CD4-positive, alpha-beta memory T cell (primary cell): ENCODE measurements at regions of chr6 and their contacts with region 1.

Region 1: DNA sequence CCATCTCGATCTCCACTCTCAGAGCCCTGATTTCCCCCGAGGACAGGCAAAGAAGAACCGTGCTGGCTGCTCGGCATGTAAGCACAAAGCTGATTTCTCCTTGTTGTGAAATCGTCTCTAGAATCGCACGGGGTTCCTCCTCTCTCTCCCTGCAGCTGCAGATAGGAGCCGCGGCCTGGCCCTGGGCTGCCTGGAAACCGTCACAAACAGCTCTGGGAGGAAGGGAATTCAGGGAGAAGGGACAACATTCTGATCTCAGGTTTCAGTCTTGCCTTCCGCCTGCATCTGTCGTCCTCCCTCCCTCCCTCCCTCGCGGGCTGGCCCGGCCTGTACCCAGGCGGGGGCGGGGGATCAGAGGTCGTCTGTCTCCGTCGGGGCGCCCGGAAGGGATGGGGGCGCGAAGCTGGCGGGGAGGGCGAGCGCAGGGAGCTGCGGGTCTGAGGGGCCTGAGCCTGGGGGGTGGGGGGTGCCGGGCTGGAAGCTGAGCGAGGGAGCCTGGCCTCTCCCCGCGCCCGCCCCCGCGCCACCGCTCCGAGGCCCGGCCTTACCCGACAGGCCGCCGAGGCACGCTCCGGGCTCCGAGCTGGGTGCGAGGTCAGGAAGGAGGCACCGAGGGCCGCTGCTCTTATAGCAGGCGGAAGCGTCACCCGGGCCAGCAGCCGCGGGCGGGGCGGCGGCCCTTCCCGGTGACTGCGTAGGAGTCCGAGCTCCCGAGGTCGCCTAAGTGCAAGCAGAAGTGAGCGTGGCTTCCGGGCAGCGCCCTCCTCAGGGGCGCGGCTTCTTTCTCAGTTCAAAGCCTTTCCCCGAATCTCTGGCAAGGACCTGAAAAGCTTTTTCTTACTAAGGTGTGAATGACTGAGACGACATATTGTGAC is at the start of gene SERPINB1:
- DNase-seq: peak; percentile 64 to 73 (median 68)
- H3K4me3 ChIP-seq: peak within 1 kb of the TSS; percentile 49 to 58
- H3K4me3 Mint-ChIP-seq: peak within 1 kb of the TSS; percentile 89 to 96 (median 93)
- H3K27ac ChIP-seq: peak within 1 kb of the TSS; percentile 73
- H3K27ac Mint-ChIP-seq: peak within 1 kb of the TSS; percentile 93 to 98 (median 95)
- H3K4me1 ChIP-seq: peaks cover 46% of the 10 kb centered on the region
- H3K4me1 Mint-ChIP-seq: peaks cover 39 to 63% (median 51%) of the 10 kb centered on the region in 4 donors
- H3K27me3 ChIP-seq: no peaks in the 10 kb centered on the region
- H3K27me3 Mint-ChIP-seq: no peaks in the 10 kb centered on the region
- total RNA-seq, gene SERPINB1: 56.7 to 58.0 TPM

Region 2: GRCh38 chr6:2765166-2765895 is 76.2 kb before region 1 on chr6 and contains the start of gene WRNIP1:
- CTCF ChIA-PET with region 1: interaction called, 8 read pairs
- POLR2A ChIA-PET with region 1: interaction called, 75 read pairs
- intact Hi-C with region 1: loop called (anchors 1 kb)
- DNase-seq: peak; percentile 95 to 98 (median 98)
- H3K4me3 ChIP-seq: peak within 1 kb of the TSS; percentile 63 to 79
- H3K4me3 Mint-ChIP-seq: peak within 1 kb of the TSS; percentile 93 to 97 (median 95)
- H3K27ac ChIP-seq: peak within 1 kb of the TSS; percentile 90
- H3K27ac Mint-ChIP-seq: peak within 1 kb of the TSS; percentile 98 to 100 (median 99)
- H3K4me1 ChIP-seq: peaks cover 45% of the 10 kb centered on the region
- H3K4me1 Mint-ChIP-seq: peaks cover 33 to 63% (median 43%) of the 10 kb centered on the region in 4 donors
- H3K27me3 ChIP-seq: no peaks in the 10 kb centered on the region
- H3K27me3 Mint-ChIP-seq: peaks cover 0 to 1% of the 10 kb centered on the region in 2 donors
- total RNA-seq, gene WRNIP1: 41.1 to 42.7 TPM

Region 3: DNA sequence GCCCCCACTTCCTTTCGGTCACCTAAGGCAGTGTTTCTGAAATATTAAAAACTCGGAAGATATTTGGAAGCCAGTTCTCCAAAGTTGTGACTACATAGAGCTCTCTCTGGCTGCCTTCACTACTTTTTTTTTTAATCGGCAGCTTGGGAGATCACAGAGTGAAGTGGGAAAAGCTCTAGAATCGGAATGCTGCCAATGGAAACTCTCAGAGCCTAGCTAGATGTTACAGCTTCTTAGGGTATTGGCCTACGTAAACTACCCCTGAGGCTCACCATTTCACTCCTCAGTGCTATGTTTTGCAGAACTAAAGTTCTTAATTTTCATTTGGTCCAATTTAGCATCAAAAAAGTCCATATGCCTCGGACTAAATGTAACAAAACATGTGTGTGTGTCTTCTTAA is 14.4 kb before region 1 on chr6:
- CTCF ChIA-PET with region 1: interaction called, 8 read pairs
- POLR2A ChIA-PET with region 1: interaction called, 12 read pairs
- intact Hi-C with region 1: no loop called
- DNase-seq: no peak
- H3K4me3 ChIP-seq: no peak overlapping the region
- H3K4me3 Mint-ChIP-seq: no peak overlapping the region
- H3K27ac ChIP-seq: no peak overlapping the region
- H3K27ac Mint-ChIP-seq: no peak overlapping the region
- H3K4me1 ChIP-seq: no peaks in the 10 kb centered on the region
- H3K4me1 Mint-ChIP-seq: peaks cover 0 to 4% (median under 1%) of the 10 kb centered on the region in 4 donors
- H3K27me3 ChIP-seq: no peaks in the 10 kb centered on the region
- H3K27me3 Mint-ChIP-seq: no peaks in the 10 kb centered on the region

Region 4: DNA sequence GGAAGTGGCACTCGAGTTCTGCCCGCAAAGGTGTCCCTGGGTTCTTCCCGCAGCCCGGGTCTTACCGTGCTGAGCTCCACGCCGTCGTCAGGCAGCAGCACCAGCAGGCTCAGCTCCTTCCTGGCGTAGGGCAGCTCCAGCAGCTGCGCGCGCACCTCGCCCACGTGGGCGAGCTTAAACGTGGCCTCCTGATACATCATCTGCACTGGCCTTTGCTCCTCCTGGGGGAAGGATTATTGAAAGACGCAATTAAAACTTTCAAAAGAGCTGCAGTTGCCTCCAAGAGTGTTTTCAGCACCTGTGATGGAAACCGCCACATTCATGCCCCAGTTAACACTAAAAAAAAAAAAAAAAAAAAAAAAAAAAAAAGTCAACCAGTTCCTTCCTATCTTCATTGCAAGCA is 50.3 kb after region 1 on chr6:
- CTCF ChIA-PET with region 1: interaction called, 135 read pairs
- POLR2A ChIA-PET with region 1: interaction called, 33 read pairs
- intact Hi-C with region 1: loop called (anchors 1 kb)
- DNase-seq: peak; percentile 79 to 94 (median 85)
- H3K4me3 ChIP-seq: no peak overlapping the region
- H3K4me3 Mint-ChIP-seq: peak overlapping the region; percentile 77 to 88 (median 81)
- H3K27ac ChIP-seq: peak overlapping the region; percentile 49
- H3K27ac Mint-ChIP-seq: peak overlapping the region; percentile 91 to 96 (median 95)
- H3K4me1 ChIP-seq: peaks cover 55% of the 10 kb centered on the region
- H3K4me1 Mint-ChIP-seq: peaks cover 40 to 75% (median 60%) of the 10 kb centered on the region in 4 donors
- H3K27me3 ChIP-seq: no peaks in the 10 kb centered on the region
- H3K27me3 Mint-ChIP-seq: no peaks in the 10 kb centered on the region

Region 5: DNA sequence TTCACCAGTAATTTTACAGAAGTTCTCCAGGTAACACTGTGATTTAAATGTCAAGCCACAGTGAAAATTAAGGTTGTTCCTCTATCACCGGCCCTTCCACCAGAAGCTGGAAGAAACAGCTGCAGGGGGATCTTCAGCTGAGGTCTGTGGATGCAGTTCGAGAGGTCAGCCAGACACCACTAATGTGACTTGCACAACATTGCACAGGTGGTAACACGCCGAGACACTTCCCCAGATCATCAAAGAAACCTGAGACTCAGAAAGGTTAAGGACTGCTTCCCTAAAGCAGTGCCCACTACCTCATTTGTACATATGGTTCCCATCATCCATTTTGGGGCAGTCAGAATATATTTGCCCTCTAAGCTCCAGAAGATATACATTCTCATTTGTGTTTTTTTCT is 69.7 kb after region 1 on chr6:
- CTCF ChIA-PET with region 1: interaction called, 223 read pairs
- POLR2A ChIA-PET with region 1: interaction called, 59 read pairs
- intact Hi-C with region 1: loop called (anchors 1 kb)
- DNase-seq: no peak
- H3K4me3 ChIP-seq: no peak overlapping the region
- H3K4me3 Mint-ChIP-seq: no peak overlapping the region
- H3K27ac ChIP-seq: no peak overlapping the region
- H3K27ac Mint-ChIP-seq: no peak overlapping the region
- H3K4me1 ChIP-seq: peaks cover 6% of the 10 kb centered on the region
- H3K4me1 Mint-ChIP-seq: peaks cover 15 to 31% (median 22%) of the 10 kb centered on the region in 4 donors
- H3K27me3 ChIP-seq: no peaks in the 10 kb centered on the region
- H3K27me3 Mint-ChIP-seq: no peaks in the 10 kb centered on the region

Region 6: DNA sequence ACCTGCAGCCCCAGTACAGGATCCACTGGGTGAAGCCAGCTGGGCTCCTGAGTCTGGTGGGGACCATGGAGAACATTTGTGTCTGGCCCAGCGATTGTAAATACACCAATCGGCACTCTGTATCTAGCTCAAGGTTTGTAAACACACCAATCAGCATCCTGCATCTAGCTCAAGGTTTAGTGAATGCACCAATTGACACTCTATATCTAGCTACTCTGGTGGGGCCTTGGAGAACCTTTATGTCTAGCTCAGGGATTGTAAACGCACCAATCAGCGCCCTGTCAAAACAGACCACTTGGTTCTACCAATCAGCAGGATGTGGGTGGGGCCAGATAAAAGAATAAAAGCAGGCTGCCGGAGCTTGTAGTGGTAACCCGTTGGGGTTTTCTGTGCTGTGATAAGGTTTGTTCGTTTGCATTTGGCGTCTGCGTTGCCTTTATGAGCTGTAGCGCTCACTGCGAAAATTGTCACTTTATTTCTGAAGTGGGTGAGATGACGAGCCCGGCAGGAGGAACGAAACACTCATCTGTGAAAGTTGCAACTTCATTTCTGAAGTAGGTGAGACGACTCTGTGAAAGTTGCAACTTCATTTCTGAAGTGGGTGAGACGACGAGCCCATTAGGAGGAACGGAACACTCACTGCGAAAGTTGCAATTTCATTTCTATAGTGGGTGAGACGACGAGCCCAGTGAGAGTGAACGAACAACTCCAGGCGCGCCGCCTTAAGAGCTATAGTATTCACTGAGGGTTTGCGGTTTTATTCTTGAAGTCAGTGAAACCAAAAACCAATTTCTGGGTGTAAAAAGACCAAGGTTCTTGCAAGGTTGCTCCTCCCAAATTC is 98.7 kb after region 1 on chr6:
- CTCF ChIA-PET with region 1: interaction called, 186 read pairs
- POLR2A ChIA-PET with region 1: interaction called, 27 read pairs
- intact Hi-C with region 1: no loop called
- DNase-seq: peak; percentile 76 to 93 (median 80)
- H3K4me3 ChIP-seq: peak overlapping the region; percentile 58 to 59
- H3K4me3 Mint-ChIP-seq: peak overlapping the region; percentile 79 to 95 (median 90)
- H3K27ac ChIP-seq: peak overlapping the region; percentile 61
- H3K27ac Mint-ChIP-seq: peak overlapping the region; percentile 89 to 99 (median 96)
- H3K4me1 ChIP-seq: peaks cover 81% of the 10 kb centered on the region
- H3K4me1 Mint-ChIP-seq: peaks cover 49 to 73% (median 60%) of the 10 kb centered on the region in 4 donors
- H3K27me3 ChIP-seq: no peaks in the 10 kb centered on the region
- H3K27me3 Mint-ChIP-seq: no peaks in the 10 kb centered on the region